Mucosa of descending colon (tissue), 3 donors: ENCODE measurements at regions of chr4 and their contacts with region 1.

Region 1: GRCh38 chr4:2934813-2935761 is 28.1 kb downstream of the NOP14 start:
- DNase-seq: peak; percentile 97 to 99 (median 98)
- ATAC-seq: peak; percentile 86
- H3K4me3 ChIP-seq: peak overlapping the region; percentile 75
- H3K4me1 ChIP-seq: peaks cover 34% of the 10 kb centered on the region
- CTCF ChIP-seq: no peak

Region 2: GRCh38 chr4:2843263-2843940 is 91.7 kb before region 1 on chr4 and contains the start of gene ADD1:
- intact Hi-C with region 1: loop called in 1 of 2 experiments (anchors 10 kb)
- DNase-seq: peak; percentile 91 to 99 (median 95)
- ATAC-seq: peak; percentile 99
- H3K4me3 ChIP-seq: peak within 1 kb of the TSS; percentile 72
- H3K4me1 ChIP-seq: peaks cover 28% of the 10 kb centered on the region
- CTCF ChIP-seq: no peak
- total RNA-seq, gene ADD1: 201 to 373 (median 261) TPM